ENCODE measurements at regions of chr11 and their contacts with region 1.

Region 1: GRCh38 chr11:9314291-9315036 is at the start of gene TMEM41B:
- DNase-seq: peak; percentile 95 to 97
- ATAC-seq: peak; percentile 95 to 96
- H3K4me3 ChIP-seq: peak within 1 kb of the TSS; percentile 91 to 98 (median 96)
- H3K27ac ChIP-seq: peak within 1 kb of the TSS; percentile 84 to 90 (median 86)
- H3K4me1 ChIP-seq: peaks cover 5 to 6% of the 10 kb centered on the region in 2 donors
- H3K27me3 ChIP-seq: peaks cover 0 to 9% (median 0%) of the 10 kb centered on the region in 3 donors
- CTCF ChIP-seq: no peak
- POLR2A ChIP-seq: peak; percentile 71 to 84
- total RNA-seq, gene TMEM41B: 9.4 to 24.9 (median 15.5) TPM

Region 2: DNA sequence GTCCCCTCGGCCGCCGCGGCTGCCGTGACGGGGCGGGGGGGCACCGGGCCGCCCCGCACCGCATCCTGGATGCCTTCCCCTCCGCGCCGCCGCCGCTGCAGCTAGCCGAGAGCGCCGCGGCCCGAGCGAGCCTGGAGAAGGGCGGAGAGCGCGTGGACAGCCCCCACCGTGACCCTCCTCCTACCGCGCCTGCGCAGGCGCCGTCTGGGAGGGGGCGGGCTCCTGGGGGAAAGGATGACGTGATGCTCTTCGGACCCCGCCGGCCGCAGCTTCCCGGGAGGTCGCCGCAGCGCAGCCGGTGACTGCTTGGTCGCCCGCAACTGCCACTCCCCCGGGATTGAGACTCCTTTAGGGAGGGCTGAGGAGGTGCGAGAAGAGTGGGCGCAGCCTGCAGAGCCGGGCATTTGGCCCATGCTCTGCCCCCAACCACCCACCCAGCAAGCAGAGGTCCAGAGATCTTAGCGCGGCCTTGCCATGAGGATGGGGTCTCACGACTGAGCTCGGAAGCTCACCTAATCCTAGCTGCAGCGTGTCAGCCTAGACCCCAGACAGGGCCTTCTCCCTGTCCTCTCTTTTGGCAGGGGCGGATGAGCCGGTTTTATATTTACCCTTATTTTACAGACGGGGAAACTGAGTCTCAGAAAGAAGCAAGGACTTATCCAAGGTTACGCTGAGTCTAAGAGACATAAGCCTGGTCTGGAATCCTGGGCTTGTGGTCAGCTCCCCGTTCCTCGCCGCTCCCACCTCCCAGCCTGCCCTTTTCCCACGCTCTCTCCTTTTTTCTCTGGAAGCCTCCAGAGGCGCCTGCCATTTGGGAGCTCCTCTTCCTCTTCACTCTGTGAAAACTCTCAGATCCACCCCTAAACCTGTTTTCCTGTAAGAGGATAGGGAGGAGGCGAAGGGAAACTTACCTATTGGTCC is 49.0 kb before region 1 on chr11 and contains the start of gene DENND5A:
- in situ Hi-C with region 1: no loop called
- intact Hi-C with region 1: loop called (anchors 2 kb)
- DNase-seq: peak; percentile 63 to 70
- ATAC-seq: peak; percentile 79 to 92
- H3K4me3 ChIP-seq: peak within 1 kb of the TSS; percentile 83 to 97 (median 94)
- H3K27ac ChIP-seq: peak within 1 kb of the TSS; percentile 80 to 94 (median 89)
- H3K4me1 ChIP-seq: peaks cover 4 to 13% of the 10 kb centered on the region in 2 donors
- H3K27me3 ChIP-seq: no peaks in the 10 kb centered on the region
- CTCF ChIP-seq: no peak
- POLR2A ChIP-seq: peak; percentile 78 to 82
- total RNA-seq, gene DENND5A: 29.1 to 33.1 (median 31.5) TPM

Region 3: GRCh38 chr11:9363954-9364912 is 49.8 kb after region 1 on chr11:
- in situ Hi-C with region 1: no loop called
- intact Hi-C with region 1: loop called (anchors 1 kb)
- DNase-seq: peak; percentile 93 to 96
- ATAC-seq: peak; percentile 98
- H3K4me3 ChIP-seq: peak overlapping the region; percentile 46 to 69 (median 56)
- H3K27ac ChIP-seq: peak overlapping the region; percentile 98 to 100 (median 99)
- H3K4me1 ChIP-seq: peaks cover 3 to 8% of the 10 kb centered on the region in 2 donors
- H3K27me3 ChIP-seq: no peaks in the 10 kb centered on the region
- CTCF ChIP-seq: no peak
- POLR2A ChIP-seq: peak; percentile 68 to 82

Region 4: GRCh38 chr11:9379046-9379445 is 64.6 kb after region 1 on chr11:
- in situ Hi-C with region 1: loop called in 1 of 4 experiments (anchors 10 kb)
- intact Hi-C with region 1: loop called (anchors 1 kb)
- DNase-seq: no peak
- ATAC-seq: no peak
- H3K4me3 ChIP-seq: no peak overlapping the region
- H3K27ac ChIP-seq: no peak overlapping the region
- H3K4me1 ChIP-seq: peaks cover 0 to 8% of the 10 kb centered on the region in 2 donors
- H3K27me3 ChIP-seq: no peaks in the 10 kb centered on the region
- CTCF ChIP-seq: no peak
- POLR2A ChIP-seq: no peak

Region 5: DNA sequence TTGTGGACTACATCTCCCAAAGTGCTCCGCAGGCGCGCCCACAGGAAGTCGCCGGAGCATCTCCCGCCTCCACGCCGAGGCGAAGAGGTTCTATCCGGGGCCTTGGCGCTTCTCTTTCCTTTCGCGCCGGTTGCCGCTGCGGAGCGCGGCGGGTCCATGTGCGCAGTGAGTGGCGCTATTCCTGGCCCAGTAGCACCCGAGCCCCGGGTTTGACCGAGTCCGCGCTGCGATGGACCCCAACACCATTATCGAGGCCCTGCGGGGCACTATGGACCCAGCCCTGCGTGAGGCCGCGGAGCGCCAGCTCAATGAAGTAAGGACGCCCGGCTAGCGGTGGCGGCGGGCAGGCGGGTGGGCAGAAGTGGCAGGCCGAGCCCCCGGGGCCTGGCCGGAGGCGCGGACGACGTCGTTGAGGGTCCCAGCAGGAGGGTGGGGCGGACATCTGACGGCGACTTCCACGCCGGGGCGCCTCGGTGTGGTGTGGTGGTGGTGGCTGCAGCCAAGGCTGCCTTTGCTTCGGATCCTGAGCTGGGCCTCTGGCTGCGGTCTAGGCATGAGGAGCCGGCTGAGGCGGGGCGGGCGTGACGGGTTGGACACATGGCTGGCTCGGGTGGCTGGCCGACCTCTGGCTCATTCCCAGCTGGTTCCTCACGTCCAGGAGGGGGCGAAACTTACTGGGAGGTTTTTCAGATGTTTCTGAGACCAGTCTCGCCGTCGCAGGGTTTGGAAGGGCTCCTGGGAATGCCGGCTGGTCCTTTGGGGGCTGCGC is 70.3 kb after region 1 on chr11 and contains the start of gene IPO7:
- in situ Hi-C with region 1: loop called in 1 of 4 experiments (anchors 10 kb)
- intact Hi-C with region 1: loop called (anchors 1 kb)
- DNase-seq: peak; percentile 90 to 92
- ATAC-seq: peak; percentile 94
- H3K4me3 ChIP-seq: peak within 1 kb of the TSS; percentile 82 to 96 (median 92)
- H3K27ac ChIP-seq: peak within 1 kb of the TSS; percentile 94 to 99 (median 96)
- H3K4me1 ChIP-seq: peaks cover 32 to 33% of the 10 kb centered on the region in 2 donors
- H3K27me3 ChIP-seq: no peaks in the 10 kb centered on the region
- CTCF ChIP-seq: peak in 2 of 5 experiments; percentile 21 to 26
- POLR2A ChIP-seq: peak; percentile 92 to 93
- total RNA-seq, gene IPO7: 167 to 286 (median 179) TPM

Region 6: DNA sequence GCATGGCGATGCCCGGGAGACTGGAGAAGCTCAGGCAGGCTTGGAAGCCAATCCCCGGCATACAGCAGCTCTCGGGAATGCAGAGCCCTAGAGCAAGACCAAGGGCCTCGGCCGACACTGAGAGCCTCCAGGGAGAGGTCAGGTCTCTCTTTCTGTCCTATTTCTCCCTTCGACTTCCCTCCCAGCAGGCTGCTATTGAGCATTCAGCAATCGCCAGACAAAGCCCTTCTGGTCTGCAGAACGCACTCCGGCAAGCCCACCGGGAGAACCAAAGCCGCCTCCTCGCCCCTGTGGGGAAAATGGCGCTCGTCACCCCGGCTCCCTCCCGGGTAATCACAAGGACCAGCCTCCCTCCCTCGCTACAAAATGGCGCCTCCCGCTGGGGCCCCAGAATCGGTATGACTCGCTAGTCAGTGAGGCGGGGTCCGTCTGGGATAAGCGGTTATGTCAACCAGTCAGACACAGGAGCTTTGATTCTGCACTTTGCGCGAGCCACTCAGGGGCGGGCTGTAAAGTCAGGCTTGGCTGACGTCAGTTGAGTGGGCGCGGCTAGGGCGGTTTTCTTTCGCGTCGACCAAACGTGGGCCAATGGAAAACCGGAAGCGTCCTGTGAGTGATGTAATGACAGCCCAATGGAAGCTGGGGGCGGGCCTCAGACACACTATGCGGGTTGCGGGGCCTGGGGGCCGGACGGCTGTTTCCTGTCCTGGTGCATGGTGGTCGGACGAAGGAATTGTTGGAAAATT is 146.0 kb after region 1 on chr11 and contains the start of gene ZNF143:
- in situ Hi-C with region 1: no loop called
- intact Hi-C with region 1: loop called (anchors 2 kb)
- DNase-seq: peak; percentile 100
- ATAC-seq: peak; percentile 92 to 95
- H3K4me3 ChIP-seq: peak within 1 kb of the TSS; percentile 87 to 100 (median 96)
- H3K27ac ChIP-seq: peak within 1 kb of the TSS; percentile 98 to 100 (median 100)
- H3K4me1 ChIP-seq: peaks cover 20 to 27% of the 10 kb centered on the region in 2 donors
- H3K27me3 ChIP-seq: no peaks in the 10 kb centered on the region
- CTCF ChIP-seq: peak in 3 of 5 experiments; percentile 19 to 69 (median 42)
- POLR2A ChIP-seq: peak; percentile 88 to 94
- total RNA-seq, gene ZNF143: 33.3 to 42.6 (median 36.9) TPM